OCI-LY7 (cell line): ENCODE measurements at regions of chr12 and their contacts with region 1.

Region 1: DNA sequence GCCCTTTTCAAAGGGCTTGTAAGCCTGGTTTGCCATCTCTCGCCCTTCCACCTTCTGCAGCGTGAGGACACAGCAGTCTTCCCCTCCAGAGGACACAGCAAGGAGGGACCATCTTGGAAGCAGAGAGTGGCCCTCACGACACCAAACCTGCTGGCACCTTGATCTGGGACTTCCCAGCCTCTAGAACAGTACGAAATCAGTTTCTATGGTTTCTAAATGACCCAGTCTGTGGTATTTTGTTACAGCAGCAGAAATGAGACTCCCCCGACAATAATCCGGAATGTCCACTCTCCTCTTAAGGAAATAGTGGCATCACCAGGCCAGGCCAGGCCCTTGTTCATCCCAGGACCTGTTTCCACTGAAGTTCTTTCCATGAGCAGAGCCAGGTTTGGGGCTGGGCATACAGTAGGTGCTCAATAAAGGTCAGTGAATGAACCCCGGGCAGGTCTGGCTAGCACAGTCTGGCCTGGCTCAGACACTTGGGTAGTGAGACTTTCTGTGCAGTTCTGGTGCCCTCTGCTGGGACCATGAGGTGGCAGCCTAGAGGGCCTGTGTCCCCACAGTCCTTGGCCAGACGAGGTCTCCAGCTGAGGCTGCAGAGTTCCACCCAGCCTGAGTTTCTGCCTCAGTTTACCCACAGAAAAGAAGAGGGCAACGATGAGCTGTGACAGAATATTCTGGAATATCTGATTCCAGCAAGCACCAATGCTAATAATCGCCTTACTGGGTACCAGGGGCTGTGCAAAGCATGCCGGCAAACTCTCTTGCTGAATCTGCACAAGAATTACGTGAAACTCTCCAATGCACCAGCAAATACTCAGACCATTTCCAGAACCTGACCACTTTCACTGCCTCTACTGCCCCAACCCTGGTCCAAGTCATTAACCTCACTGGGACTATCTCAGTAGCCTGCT is 14.0 kb downstream of the ABCB9 start:
- DNase-seq: peak; percentile 83
- H3K4me3 ChIP-seq: no peak overlapping the region
- H3K27ac ChIP-seq: no peak overlapping the region
- H3K4me1 ChIP-seq: no peaks in the 10 kb centered on the region
- CTCF ChIP-seq: peak; percentile 95

Region 2: DNA sequence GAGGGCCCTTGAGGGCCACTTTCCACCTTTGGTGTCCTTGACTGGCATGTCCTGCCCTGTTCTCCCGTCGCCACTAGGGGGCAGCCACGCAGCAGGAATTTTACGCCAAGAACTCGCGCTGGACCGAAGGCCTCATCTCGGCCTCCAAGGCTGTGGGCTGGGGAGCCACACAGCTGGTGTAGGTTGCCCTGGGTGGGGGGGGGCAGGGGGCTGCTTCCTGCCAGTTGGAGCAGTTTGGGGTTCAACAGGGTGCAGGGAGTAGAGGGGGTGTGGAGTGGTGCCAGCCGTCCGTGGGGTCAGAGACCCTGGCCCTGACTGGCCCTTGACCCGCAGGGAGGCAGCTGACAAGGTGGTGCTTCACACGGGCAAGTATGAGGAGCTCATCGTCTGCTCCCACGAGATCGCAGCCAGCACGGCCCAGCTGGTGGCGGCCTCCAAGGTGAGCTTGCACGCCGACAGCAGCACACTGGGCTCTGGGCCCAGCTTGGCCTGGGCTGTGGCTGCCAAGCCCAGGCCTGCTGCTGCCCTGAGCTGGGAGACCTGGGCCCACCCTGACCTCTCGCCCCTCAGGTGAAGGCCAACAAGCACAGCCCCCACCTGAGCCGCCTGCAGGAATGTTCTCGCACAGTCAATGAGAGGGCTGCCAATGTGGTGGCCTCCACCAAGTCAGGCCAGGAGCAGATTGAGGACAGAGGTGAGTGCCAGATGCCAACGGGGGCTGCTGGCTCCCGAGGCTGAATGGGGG is 91.7 kb before region 1 on chr12:
- CTCF ChIA-PET with region 1: no interaction called
- POLR2A ChIA-PET with region 1: no interaction called
- intact Hi-C with region 1: loop called (anchors 1 kb)
- DNase-seq: peak; percentile 71
- H3K4me3 ChIP-seq: no peak overlapping the region
- H3K27ac ChIP-seq: no peak overlapping the region
- H3K4me1 ChIP-seq: peaks cover 2% of the 10 kb centered on the region
- CTCF ChIP-seq: peak; percentile 89

Region 3: DNA sequence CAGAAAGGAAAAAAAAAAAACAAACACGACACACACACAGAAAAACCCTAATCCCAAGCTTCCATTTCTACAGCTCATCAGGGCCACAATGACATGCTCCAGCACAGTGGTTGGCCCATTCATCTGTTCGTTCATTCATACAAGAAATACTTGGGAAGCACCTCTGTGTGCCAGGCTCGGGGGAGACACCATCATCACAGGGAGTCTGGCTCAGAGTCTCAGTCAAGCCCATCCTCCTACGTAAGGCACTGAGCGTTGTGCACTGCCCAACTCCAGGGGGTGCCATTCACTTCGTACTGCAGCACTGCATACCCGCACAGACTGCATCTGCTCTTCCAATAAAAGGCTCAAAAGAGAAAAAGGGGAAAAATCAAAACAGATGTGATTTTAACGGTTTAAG is 71.6 kb before region 1 on chr12:
- CTCF ChIA-PET with region 1: interaction called, 3 read pairs
- POLR2A ChIA-PET with region 1: no interaction called
- intact Hi-C with region 1: loop called (anchors 2 kb)
- DNase-seq: peak; percentile 66
- H3K4me3 ChIP-seq: no peak overlapping the region
- H3K27ac ChIP-seq: no peak overlapping the region
- H3K4me1 ChIP-seq: peaks cover 38% of the 10 kb centered on the region
- CTCF ChIP-seq: peak; percentile 83